ENCODE measurements at regions of chr9 and their contacts with region 1.

Region 1: DNA sequence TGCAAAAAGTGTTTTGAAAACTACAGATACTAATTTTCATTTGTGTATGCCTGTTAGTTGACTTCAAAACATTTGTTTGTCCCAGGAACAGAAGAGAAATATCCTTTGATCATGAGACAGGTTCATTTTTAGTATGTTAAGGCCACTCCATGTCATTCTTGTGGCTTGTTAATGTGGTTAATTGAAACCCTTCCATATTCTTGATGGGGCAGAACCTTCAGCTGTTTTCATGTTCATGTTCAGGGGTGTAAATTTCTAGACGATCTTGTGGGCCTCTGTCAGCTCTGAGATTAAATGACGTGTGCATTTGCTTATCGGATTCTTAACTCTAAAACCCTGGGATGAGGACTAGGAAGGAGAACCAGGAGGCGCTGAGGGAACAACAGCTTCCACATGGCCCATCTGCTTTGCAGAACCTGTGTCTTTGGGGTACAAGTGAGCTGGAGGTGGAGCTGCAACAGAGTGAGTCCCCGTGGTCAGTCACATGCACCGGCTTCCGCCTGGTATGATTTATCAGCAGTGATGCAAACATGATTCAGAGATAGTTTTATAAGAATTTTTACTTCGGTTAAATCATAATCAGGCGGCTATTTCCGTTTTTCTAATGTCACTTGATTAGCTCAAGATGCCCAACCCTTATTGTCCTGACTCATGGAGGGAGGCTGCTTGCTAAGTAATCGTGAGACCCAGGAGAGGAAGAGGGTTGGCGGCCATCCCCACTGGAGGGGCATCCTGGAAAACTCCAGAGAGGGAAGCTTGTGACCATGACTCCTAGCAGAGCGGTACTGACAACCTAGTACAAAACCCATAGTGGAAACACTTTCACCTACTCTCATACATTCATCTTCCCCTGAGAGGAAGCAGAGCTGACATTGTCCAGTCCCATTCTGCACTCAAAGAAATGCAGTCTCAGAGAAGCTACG is 138.4 kb downstream of the C9orf152 start:
- DNase-seq: peak; percentile 30 to 64
- ATAC-seq: peak; percentile 35 to 86 (median 70)
- H3K4me3 ChIP-seq: no peak overlapping the region
- H3K27ac ChIP-seq: peak overlapping the region in 9 of 10 donors; percentile 12 to 76 (median 56)
- H3K4me1 ChIP-seq: peaks cover 6 to 100% (median 86%) of the 10 kb centered on the region in 9 donors
- H3K27me3 ChIP-seq: no peaks in the 10 kb centered on the region
- CTCF ChIP-seq: no peak

Region 2: GRCh38 chr9:109721001-109721400 is 348.6 kb before region 1 on chr9:
- intact Hi-C with region 1: no loop called
- DNase-seq: no peak
- ATAC-seq: peak in 2 of 8 donors; percentile 31 to 39
- H3K4me3 ChIP-seq: no peak overlapping the region
- H3K27ac ChIP-seq: no peak overlapping the region
- H3K4me1 ChIP-seq: peaks cover 0 to 8% (median 0%) of the 10 kb centered on the region in 9 donors
- H3K27me3 ChIP-seq: no peaks in the 10 kb centered on the region
- CTCF ChIP-seq: no peak

Region 3: GRCh38 chr9:110099236-110100095 is 29.9 kb after region 1 on chr9:
- intact Hi-C with region 1: no loop called
- DNase-seq: no peak
- ATAC-seq: peak in 6 of 8 donors; percentile 15 to 80 (median 32)
- H3K4me3 ChIP-seq: no peak overlapping the region
- H3K27ac ChIP-seq: peak overlapping the region in 3 of 10 donors; percentile 0 to 11 (median 4)
- H3K4me1 ChIP-seq: peaks cover 22 to 88% (median 78%) of the 10 kb centered on the region in 9 donors
- H3K27me3 ChIP-seq: no peaks in the 10 kb centered on the region
- CTCF ChIP-seq: peak in 1 of 9 donors; percentile 7

Region 4: DNA sequence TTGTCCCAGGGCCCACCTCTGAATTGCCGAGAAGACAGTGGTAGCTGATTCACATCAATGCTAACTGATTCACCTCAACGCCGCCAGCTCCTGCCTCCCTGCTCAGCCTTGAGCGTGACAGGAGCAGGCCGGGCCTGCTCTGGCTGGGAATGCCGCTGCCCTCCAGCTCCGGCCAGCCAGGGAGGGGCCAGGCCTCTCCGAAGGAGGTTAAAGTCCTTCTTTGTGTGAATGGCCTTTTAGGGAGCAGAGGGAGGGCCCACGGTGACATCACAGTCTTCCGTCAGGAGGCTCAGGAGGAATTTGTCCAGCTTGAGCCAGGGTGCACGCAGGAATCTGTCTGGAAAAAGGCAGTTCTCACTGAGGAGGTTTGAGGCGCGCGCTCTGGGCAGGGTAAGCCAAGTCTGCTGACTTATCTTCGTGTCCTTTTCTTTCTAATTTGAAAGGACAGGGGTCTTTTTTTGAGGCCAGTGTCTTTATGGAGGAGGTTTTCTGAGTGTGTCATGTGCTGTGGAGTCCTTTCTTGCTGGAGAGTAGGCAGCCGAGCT is 55.7 kb after region 1 on chr9:
- intact Hi-C with region 1: loop called in 2 of 10 experiments (anchors 5 kb)
- DNase-seq: peak; percentile 82 to 92
- ATAC-seq: peak; percentile 78 to 90 (median 86)
- H3K4me3 ChIP-seq: peak overlapping the region; percentile 25 to 53 (median 42)
- H3K27ac ChIP-seq: peak overlapping the region; percentile 78 to 94 (median 87)
- H3K4me1 ChIP-seq: peaks cover 20 to 100% (median 76%) of the 10 kb centered on the region in 9 donors
- H3K27me3 ChIP-seq: no peaks in the 10 kb centered on the region
- CTCF ChIP-seq: no peak

Region 5: GRCh38 chr9:110143950-110144545 is 74.5 kb after region 1 on chr9:
- intact Hi-C with region 1: loop called in 3 of 10 experiments (anchors 5 to 10 kb)
- DNase-seq: no peak
- ATAC-seq: peak in 7 of 8 donors; percentile 21 to 70 (median 47)
- H3K4me3 ChIP-seq: no peak overlapping the region
- H3K27ac ChIP-seq: peak overlapping the region in 7 of 10 donors; percentile 6 to 64 (median 36)
- H3K4me1 ChIP-seq: peaks cover 12 to 100% (median 95%) of the 10 kb centered on the region in 9 donors
- H3K27me3 ChIP-seq: no peaks in the 10 kb centered on the region
- CTCF ChIP-seq: no peak

Measured in heart right ventricle (tissue), 16 donors.